Activated CD4-positive, alpha-beta memory T cell treated with anti-CD3 and anti-CD28 coated beads, Interleukin-2, amount 10 ng/mL, durations not matched to agents 7 days and 5 days (primary cell): ENCODE measurements at regions of chr3 and their contacts with region 1.

Region 1: DNA sequence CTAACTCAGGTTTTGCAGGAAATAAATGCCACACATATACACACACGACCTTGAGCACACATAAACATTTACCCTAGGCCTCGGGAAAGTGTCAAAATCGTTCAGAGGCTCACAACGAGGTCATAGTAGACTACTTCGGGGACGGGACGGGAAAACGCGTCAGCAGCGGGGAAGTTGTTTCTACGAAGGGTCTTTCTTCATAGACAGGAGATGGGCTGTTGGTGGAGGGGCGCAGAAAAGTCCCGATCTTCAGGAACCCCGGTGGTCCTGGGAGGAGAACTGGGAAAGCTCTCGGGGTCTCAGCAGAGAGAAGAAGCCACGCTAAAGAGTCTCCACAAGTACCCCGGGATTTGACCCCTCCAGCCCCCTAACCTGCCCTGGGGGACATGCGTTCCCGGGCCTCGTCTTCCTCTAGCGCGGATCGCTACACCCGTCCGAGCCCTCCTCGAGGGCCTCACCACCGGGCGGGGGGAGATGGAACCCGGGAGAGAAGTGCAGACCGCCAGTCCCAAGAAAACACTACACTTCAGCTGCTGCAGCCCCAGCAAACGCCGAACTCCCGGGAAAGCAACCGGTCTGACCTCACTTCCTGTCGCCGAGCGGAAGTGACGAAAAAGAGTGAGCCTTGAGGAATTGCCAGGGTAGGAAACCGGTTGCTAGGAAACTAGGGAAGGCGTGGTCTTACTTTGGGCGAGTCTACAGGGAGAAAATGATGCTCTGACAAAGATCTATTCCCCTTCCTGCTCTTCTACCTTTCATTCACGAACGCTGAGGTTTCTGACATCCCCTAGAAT is at the start of gene PIK3R4:
- DNase-seq: peak; percentile 95
- H3K4me3 Mint-ChIP-seq: peak within 1 kb of the TSS; percentile 84
- H3K27ac Mint-ChIP-seq: peak within 1 kb of the TSS; percentile 92
- H3K4me1 Mint-ChIP-seq: peaks cover 52% of the 10 kb centered on the region
- H3K27me3 Mint-ChIP-seq: no peaks in the 10 kb centered on the region
- total RNA-seq, gene PIK3R4: 21.6 to 25.0 TPM

Region 2: DNA sequence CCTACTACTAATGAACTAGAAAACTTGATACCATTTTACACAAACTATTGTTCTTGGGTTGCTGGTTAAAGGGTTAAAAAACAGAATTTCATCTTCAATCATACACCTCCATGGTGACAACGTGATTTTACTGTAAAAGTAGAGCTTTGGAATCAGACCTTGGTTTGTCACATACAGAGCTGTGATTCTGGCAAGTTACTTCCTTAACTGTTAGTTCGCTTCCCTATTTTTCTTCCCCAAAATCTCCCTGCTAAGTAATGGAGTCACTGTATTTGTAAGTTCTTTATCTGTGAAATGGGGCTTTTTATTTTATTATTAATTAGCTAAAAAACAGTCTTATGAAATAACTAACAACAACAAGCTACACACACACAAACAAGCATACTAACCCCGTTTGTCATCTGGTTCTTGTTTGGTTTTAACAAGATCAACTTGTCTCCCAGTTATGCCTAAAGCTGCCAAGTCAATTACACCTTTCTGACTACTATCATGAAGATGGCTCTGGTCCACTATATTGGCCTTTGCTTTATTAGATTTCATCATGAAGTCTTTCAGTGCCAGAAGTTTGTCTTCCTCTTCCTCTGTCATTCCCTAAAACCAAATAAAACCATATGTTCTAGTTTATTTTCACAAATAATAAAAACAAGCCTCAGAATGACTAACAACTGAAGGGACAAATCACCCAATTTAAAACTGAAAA is 38.4 kb before region 1 on chr3:
- CTCF ChIA-PET with region 1: no interaction called
- POLR2A ChIA-PET with region 1: no interaction called
- DNase-seq: no peak
- H3K4me3 Mint-ChIP-seq: no peak overlapping the region
- H3K27ac Mint-ChIP-seq: no peak overlapping the region
- H3K4me1 Mint-ChIP-seq: no peaks in the 10 kb centered on the region
- H3K27me3 Mint-ChIP-seq: no peaks in the 10 kb centered on the region

Region 3: DNA sequence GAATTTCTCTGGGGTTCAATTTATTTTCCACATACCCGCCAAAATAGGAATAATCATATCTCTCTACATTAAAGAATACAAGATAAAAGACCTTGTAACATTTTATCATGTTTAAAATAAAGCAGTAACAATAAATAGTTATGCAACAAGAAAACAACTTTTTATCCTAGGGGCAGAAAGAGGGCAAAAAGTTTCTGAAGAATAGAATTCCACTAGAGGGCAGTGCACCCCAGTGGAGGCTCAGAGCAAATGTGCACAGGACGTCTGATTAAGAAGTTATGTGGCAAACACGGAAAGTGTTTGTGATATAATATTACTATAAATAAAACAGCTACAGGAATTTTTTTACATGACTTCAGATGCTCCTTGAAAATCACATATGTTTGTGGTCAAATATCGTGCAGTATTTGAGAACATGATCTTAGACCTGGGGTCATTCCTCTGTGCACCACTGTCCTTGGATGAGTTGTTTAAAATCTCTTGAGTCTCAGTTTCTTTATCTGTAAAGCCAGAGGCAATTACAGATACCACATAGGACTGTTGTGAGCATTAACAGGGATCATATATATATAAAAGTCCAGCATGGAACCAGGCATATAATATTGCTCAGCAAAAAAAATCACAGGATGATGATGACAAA is 13.4 kb after region 1 on chr3:
- CTCF ChIA-PET with region 1: interaction called, 25 read pairs
- POLR2A ChIA-PET with region 1: interaction called, 3 read pairs
- DNase-seq: peak; percentile 65
- H3K4me3 Mint-ChIP-seq: no peak overlapping the region
- H3K27ac Mint-ChIP-seq: no peak overlapping the region
- H3K4me1 Mint-ChIP-seq: peaks cover 14% of the 10 kb centered on the region
- H3K27me3 Mint-ChIP-seq: peaks cover 10% of the 10 kb centered on the region